Activated B cell treated with CpG ODN at 0.5 μM for 24 hours (primary cell): ENCODE measurements at regions of chr16 and their contacts with region 1.

Region 1: GRCh38 chr16:3503523-3503922 is 2.7 kb downstream of the CLUAP1 start:
- DNase-seq: no peak
- ATAC-seq: no peak
- H3K4me3 Mint-ChIP-seq: peak overlapping the region; percentile 15
- H3K27ac Mint-ChIP-seq: no peak overlapping the region
- H3K4me1 Mint-ChIP-seq: peaks cover 29% of the 10 kb centered on the region
- H3K27me3 Mint-ChIP-seq: no peaks in the 10 kb centered on the region
- CTCF ChIP-seq: no peak

Region 2: GRCh38 chr16:3099732-3100499 is 403.6 kb before region 1 on chr16:
- CTCF ChIA-PET with region 1: no interaction called
- POLR2A ChIA-PET with region 1: interaction called, 3 read pairs
- intact Hi-C with region 1: loop called (anchors 2 kb)
- DNase-seq: peak; percentile 76
- ATAC-seq: peak; percentile 85
- H3K4me3 Mint-ChIP-seq: peak overlapping the region; percentile 79
- H3K27ac Mint-ChIP-seq: peak overlapping the region; percentile 32
- H3K4me1 Mint-ChIP-seq: peaks cover 37% of the 10 kb centered on the region
- H3K27me3 Mint-ChIP-seq: no peaks in the 10 kb centered on the region
- CTCF ChIP-seq: no peak

Region 3: GRCh38 chr16:3182608-3183444 is 320.7 kb before region 1 on chr16:
- CTCF ChIA-PET with region 1: no interaction called
- POLR2A ChIA-PET with region 1: no interaction called
- intact Hi-C with region 1: loop called (anchors 5 kb)
- DNase-seq: no peak
- ATAC-seq: peak; percentile 40
- H3K4me3 Mint-ChIP-seq: peak overlapping the region; percentile 62
- H3K27ac Mint-ChIP-seq: peak overlapping the region; percentile 63
- H3K4me1 Mint-ChIP-seq: peaks cover 21% of the 10 kb centered on the region
- H3K27me3 Mint-ChIP-seq: peaks cover 71% of the 10 kb centered on the region
- CTCF ChIP-seq: no peak

Region 4: GRCh38 chr16:3264137-3265036 is 239.1 kb before region 1 on chr16:
- CTCF ChIA-PET with region 1: interaction called, 4 read pairs
- POLR2A ChIA-PET with region 1: no interaction called
- intact Hi-C with region 1: loop called (anchors 1 kb)
- DNase-seq: peak; percentile 95
- ATAC-seq: peak; percentile 89
- H3K4me3 Mint-ChIP-seq: peak overlapping the region; percentile 89
- H3K27ac Mint-ChIP-seq: peak overlapping the region; percentile 95
- H3K4me1 Mint-ChIP-seq: peaks cover 27% of the 10 kb centered on the region
- H3K27me3 Mint-ChIP-seq: no peaks in the 10 kb centered on the region
- CTCF ChIP-seq: no peak

Region 5: GRCh38 chr16:3305109-3306068 is 198.1 kb before region 1 on chr16 and contains the starts of genes TIGD7 and ZNF75A:
- CTCF ChIA-PET with region 1: no interaction called
- POLR2A ChIA-PET with region 1: interaction called, 3 read pairs
- intact Hi-C with region 1: loop called (anchors 1 kb)
- DNase-seq: peak; percentile 83
- ATAC-seq: peak; percentile 91
- H3K4me3 Mint-ChIP-seq: peak within 1 kb of the TSS; percentile 88
- H3K27ac Mint-ChIP-seq: peak within 1 kb of the TSS; percentile 88
- H3K4me1 Mint-ChIP-seq: peaks cover 26% of the 10 kb centered on the region
- H3K27me3 Mint-ChIP-seq: no peaks in the 10 kb centered on the region
- CTCF ChIP-seq: no peak
- total RNA-seq, gene TIGD7: 6.7 and 11.0 TPM in 2 replicates
- total RNA-seq, gene ZNF75A: 84.0 and 97.9 TPM in 2 replicates

Region 6: DNA sequence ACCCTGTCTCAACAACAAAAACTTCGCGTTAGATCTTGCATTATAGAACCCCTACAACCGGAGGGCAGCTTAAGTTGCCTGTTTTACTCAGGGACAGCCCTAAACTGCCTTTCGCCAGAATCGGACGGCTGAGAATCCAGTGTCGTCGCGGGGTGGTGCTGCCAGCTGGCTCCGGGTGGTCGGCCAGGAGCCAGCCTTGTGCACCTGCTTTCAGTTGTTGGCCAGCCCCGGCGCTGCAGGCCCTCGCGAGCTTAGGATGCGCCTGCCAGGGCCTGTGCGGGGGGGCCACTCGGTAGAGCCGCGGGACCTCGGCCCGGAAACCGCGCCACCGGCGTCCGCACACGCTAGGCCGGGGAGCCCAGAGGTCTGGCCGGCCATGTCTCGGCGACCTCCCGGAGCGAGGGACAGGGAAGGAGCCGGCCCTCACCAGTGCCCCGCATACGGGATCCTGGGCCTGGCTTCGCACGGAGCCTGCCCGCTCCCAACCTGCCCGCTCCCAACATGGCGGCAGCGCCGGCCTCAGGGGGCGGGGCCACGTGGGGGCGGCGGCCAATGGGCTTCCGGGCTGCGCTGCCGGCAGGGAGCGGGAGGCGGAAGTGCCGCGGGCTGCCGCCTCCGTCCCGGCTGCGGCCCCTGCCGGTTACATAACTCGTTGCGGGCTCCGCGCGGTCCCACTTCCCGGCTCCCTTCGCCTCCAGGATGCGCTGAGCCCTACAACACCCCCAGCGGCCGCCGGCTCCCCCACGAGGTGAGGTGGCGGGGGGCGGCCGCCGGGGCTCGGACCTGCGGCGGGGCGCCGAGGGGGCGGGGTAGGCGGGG is 45.9 kb before region 1 on chr16:
- CTCF ChIA-PET with region 1: no interaction called
- POLR2A ChIA-PET with region 1: interaction called, 6 read pairs
- intact Hi-C with region 1: loop called (anchors 1 kb)
- DNase-seq: peak; percentile 91
- ATAC-seq: peak; percentile 90
- H3K4me3 Mint-ChIP-seq: peak overlapping the region; percentile 82
- H3K27ac Mint-ChIP-seq: peak overlapping the region; percentile 85
- H3K4me1 Mint-ChIP-seq: peaks cover 44% of the 10 kb centered on the region
- H3K27me3 Mint-ChIP-seq: no peaks in the 10 kb centered on the region
- CTCF ChIP-seq: no peak